MCF 10A (cell line): ENCODE measurements at regions of chr6 and their contacts with region 1.

Region 1: DNA sequence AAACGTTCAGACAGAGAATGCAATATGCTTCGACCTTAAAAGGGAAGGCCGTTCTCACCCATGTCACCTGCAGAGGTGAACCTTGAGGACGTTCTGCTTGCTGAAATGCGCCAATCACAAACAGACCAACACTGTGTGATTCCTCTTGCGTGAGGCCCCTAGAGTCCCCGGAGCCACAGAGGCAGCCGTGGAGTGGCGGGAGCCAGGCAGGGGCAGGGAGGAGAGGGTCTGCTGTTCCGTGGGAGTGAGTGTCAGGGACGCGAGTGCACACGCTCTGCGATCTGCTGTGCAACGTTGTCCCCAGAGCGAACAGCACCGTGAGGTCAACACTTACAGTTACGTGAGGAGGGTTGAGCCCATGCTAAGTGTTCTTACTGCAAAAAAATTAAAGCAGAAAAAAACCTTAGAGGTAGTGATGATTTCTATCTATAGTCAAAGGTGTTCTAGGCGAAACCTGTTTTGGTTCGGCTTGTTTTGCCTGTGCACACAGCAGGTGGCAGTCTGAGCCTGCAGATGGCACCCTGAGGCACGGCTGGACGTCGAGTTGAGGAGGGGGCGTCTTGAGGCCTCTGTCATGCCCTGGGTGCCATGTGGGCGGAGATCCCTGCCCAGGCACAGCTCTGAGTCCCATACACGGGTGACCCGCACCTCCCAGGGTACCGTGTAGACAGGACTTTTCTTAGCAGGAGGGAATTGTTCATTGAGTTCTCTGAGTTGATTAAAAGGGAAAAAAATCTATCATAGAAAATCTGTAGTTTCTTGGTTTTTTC is 71.7 kb upstream of the FRMD1 start:
- DNase-seq: no peak
- H3K4me3 Mint-ChIP-seq: no peak overlapping the region
- H3K27ac Mint-ChIP-seq: no peak overlapping the region
- H3K4me1 Mint-ChIP-seq: no peaks in the 10 kb centered on the region
- H3K27me3 Mint-ChIP-seq: peaks cover 50% of the 10 kb centered on the region
- CTCF ChIP-seq: peak; percentile 52

Region 2: DNA sequence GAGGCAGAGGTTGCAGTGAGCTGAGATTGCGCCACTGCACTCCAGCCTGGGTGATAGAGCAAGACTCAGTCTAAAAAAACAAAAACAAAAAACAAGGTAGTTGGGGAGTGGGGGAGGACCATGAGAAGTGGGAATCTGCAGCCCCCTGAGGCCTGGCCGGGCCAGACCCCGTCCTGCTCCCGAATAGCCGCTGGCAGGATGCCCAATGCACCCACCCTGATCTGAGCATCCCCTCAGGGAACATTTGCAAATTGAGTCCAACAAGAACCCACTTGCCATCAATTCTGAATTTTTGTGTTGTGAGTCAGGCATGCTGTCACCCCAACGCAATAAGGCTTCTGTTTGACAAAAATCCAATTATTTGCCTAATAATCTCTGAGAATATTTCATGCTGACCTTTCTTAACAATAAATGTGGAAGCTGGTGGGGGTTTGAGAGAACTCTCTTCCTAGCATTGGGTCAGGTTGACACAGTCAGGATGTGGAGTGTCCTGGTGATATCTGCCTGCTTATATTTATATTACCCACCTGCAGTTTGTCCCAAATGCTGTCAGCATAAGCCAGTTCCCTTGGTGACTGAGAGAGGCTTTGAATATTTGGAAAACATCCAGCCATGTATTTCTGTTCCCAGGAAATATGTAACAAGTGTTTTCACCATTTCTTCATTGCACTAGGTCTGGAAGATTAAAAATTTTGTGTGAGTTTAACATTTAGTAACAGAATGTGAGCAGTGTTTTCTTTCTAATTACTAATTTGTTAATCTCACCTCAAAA is 43.3 kb before region 1 on chr6:
- CTCF ChIA-PET with region 1: no interaction called
- POLR2A ChIA-PET with region 1: no interaction called
- intact Hi-C with region 1: no loop called
- DNase-seq: no peak
- H3K4me3 Mint-ChIP-seq: no peak overlapping the region
- H3K27ac Mint-ChIP-seq: no peak overlapping the region
- H3K4me1 Mint-ChIP-seq: no peaks in the 10 kb centered on the region
- H3K27me3 Mint-ChIP-seq: peaks cover 29% of the 10 kb centered on the region
- CTCF ChIP-seq: no peak

Region 3: DNA sequence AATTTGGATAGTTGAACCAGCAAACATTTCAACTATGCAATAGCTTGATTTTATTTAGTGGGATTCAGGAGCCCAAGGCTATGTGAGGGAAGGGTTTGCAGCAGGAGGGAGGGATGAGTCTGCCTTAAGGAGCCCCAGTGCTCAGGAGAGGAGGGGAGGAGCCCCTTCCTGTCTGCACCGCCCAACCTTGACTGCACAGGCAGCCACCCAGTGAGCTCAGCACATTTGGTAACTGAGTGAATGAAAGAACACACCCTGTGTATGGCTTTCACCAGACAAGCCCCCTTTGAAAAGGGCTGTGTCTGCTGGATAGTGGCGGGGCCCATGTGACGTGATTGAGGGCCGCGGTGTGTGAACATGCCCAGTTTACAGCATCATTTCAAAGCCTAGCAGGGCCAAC is 151.8 kb after region 1 on chr6:
- CTCF ChIA-PET with region 1: no interaction called
- POLR2A ChIA-PET with region 1: no interaction called
- intact Hi-C with region 1: no loop called
- DNase-seq: no peak
- H3K4me3 Mint-ChIP-seq: no peak overlapping the region
- H3K27ac Mint-ChIP-seq: no peak overlapping the region
- H3K4me1 Mint-ChIP-seq: no peaks in the 10 kb centered on the region
- H3K27me3 Mint-ChIP-seq: peaks cover 54% of the 10 kb centered on the region
- CTCF ChIP-seq: no peak

Region 4: DNA sequence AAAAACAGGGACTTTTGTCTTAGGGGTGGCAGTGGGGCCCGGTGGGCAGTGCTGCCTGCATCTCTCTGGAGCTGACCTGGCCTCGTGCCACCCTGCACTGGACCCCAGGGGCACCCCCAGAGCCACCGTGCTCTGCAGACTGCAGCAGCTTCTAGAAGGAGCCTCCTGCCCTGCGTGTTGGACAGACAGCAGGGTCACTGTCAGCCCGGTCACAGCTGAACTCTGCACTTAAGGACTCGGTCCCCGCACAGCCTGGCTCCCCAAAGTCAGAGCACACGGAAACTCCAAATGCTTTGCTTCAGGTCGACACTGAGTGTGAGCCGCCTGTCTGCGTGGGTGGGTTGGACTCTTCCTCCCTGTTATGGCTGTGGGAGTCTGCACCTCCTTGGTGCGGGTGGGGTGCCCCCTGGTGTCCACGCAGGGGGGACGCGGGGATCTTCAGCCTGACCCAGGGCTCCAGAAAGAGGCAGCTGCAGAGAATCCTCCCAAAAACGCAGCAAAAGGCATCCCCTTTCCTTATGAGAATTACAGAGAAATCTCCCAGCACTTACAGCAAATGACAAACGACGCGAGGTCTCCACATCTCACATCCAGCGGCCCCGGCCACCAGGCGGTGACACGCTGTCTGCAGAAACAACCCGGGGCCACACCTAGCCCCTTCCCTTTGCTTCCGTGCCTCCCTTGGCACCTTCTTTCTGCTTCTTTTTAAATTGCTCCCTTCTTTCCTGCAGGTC is 205.1 kb after region 1 on chr6:
- CTCF ChIA-PET with region 1: interaction called, 9 read pairs
- POLR2A ChIA-PET with region 1: interaction called, 3 read pairs
- intact Hi-C with region 1: loop called (anchors 2 kb)
- DNase-seq: peak; percentile 50
- H3K4me3 Mint-ChIP-seq: no peak overlapping the region
- H3K27ac Mint-ChIP-seq: no peak overlapping the region
- H3K4me1 Mint-ChIP-seq: no peaks in the 10 kb centered on the region
- H3K27me3 Mint-ChIP-seq: peaks cover 42% of the 10 kb centered on the region
- CTCF ChIP-seq: peak; percentile 57